Activated CD8-positive, alpha-beta T cell treated with anti-CD3 and anti-CD28 coated beads for 36 hours (primary cell): ENCODE measurements at regions of chr3 and their contacts with region 1.

Region 1: DNA sequence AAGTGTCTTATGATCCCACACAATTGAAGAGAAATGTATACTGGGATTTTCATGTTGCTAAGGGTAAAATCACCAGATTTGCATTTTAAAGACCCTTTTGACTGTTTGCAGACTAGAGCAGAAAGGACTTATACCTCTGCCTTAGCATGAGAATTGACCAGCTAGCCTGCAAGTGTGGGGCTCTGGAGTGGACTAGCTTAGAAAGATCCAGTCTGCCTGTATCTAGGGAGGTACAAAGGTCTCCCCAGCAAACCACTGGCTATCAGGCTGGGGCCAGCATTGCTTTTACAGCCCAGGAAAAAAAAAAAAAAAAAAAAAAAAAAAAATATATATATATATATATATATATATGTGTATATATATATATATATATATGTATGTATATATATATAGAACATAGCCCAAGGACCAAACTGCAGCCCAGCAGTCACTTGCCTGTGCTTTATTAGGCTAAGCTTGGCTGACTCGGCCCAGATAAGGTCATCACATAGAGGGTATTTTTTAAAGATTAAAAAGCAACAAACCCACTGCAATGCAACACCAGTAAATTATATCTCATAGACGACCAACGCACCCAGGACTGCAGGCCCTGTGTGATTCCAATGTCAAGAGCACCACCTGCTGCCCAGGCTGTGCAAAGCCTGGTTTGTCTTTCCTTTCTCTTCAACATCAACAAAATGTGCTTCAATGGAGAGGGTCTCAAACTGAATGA is 63.7 kb downstream of the DCLK3 start:
- DNase-seq: peak; percentile 61
- ATAC-seq: peak; percentile 72
- H3K4me3 Mint-ChIP-seq: no peak overlapping the region
- H3K27ac Mint-ChIP-seq: no peak overlapping the region
- H3K4me1 Mint-ChIP-seq: no peaks in the 10 kb centered on the region
- H3K27me3 Mint-ChIP-seq: peaks cover 1% of the 10 kb centered on the region
- CTCF ChIP-seq: peak; percentile 70

Region 2: GRCh38 chr3:35965908-35966307 is 734.8 kb before region 1 on chr3:
- CTCF ChIA-PET with region 1: interaction called, 3 read pairs
- POLR2A ChIA-PET with region 1: no interaction called
- intact Hi-C with region 1: loop called (anchors 10 kb)
- DNase-seq: no peak
- ATAC-seq: no peak
- H3K4me3 Mint-ChIP-seq: no peak overlapping the region
- H3K27ac Mint-ChIP-seq: no peak overlapping the region
- H3K4me1 Mint-ChIP-seq: peaks cover 2% of the 10 kb centered on the region
- H3K27me3 Mint-ChIP-seq: peaks cover 1% of the 10 kb centered on the region
- CTCF ChIP-seq: peak; percentile 30

Region 3: DNA sequence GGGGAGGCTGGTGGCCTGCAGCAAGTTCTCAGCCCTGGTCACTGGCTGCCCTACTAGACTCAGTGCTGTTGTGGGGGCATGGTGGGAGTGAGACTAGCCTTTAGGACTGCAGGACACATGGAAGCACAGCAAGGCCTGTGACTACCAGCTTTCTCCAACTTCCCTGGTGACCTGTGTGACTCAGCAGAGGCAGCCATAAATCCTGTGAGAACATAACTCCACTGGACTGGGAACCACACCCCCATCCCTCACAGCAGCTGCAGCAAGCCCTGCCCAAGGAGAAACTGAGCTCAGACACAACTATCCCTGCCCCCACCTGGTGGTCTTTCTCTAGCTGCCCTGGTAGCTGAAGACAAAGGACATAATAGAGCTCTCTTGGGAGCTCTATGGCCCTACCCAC is 47.6 kb before region 1 on chr3:
- CTCF ChIA-PET with region 1: no interaction called
- POLR2A ChIA-PET with region 1: no interaction called
- intact Hi-C with region 1: no loop called
- DNase-seq: no peak
- ATAC-seq: no peak
- H3K4me3 Mint-ChIP-seq: no peak overlapping the region
- H3K27ac Mint-ChIP-seq: no peak overlapping the region
- H3K4me1 Mint-ChIP-seq: no peaks in the 10 kb centered on the region
- H3K27me3 Mint-ChIP-seq: peaks cover 36% of the 10 kb centered on the region
- CTCF ChIP-seq: no peak